ENCODE measurements at regions of chr17 and their contacts with region 1.

Region 1: DNA sequence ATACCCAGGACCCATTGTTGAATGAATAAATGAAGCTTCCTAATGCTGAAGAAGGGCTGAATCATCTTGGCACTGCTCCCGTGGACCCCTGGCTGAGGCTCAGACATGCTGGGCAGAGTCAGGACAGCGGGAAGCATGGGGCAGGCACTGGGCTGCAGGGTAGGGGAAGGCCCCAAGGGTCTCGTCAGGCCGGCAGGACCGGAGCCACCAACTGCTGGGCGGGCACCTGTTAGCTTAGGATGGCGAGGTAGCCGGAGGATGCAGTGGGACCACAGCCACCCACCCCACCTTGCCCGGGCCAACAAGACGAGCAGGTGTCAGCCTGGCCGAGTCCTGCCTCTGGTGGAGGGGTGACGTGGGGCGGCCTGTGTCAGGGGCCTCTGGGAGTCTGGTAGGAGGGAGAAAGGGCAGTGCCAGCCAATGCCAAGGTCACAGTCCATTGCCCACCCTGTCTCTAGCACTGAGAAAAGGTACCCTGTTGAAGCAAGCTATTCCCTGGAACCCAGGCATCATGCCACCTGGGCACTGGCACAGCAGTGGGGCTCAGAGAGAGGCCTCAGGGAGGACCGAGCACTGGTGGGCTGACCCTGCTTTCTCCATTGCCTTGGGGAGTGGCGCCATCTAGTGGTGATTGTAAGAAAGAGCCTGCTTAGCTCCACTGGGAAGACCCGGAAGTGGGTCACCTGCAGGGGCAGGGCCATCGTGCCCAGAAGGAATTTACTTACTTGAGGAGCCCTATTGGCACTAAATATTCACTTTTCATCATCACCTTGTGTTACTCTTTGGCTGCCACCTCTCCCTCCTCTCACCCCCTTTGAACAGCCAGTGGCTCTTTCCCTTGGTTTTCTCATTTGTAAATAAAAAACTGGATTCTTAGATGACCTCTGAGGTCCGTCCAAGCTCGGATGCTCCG is 3.0 kb upstream of the DLX3 start:
- DNase-seq: peak; percentile 94
- H3K4me3 Mint-ChIP-seq: peak overlapping the region; percentile 11
- H3K27ac Mint-ChIP-seq: no peak overlapping the region
- H3K4me1 Mint-ChIP-seq: peaks cover 24% of the 10 kb centered on the region
- H3K27me3 Mint-ChIP-seq: peaks cover 80% of the 10 kb centered on the region
- CTCF ChIP-seq: peak; percentile 93

Region 2: GRCh38 chr17:49822829-49823228 is 175.2 kb before region 1 on chr17:
- CTCF ChIA-PET with region 1: interaction called, 13 read pairs
- POLR2A ChIA-PET with region 1: no interaction called
- intact Hi-C with region 1: no loop called
- DNase-seq: no peak
- H3K4me3 Mint-ChIP-seq: no peak overlapping the region
- H3K27ac Mint-ChIP-seq: no peak overlapping the region
- H3K4me1 Mint-ChIP-seq: no peaks in the 10 kb centered on the region
- H3K27me3 Mint-ChIP-seq: no peaks in the 10 kb centered on the region
- CTCF ChIP-seq: no peak

Region 3: GRCh38 chr17:49880291-49881053 is 117.6 kb before region 1 on chr17:
- CTCF ChIA-PET with region 1: interaction called, 199 read pairs
- POLR2A ChIA-PET with region 1: interaction called, 5 read pairs
- intact Hi-C with region 1: loop called (anchors 1 kb)
- DNase-seq: peak; percentile 53
- H3K4me3 Mint-ChIP-seq: no peak overlapping the region
- H3K27ac Mint-ChIP-seq: no peak overlapping the region
- H3K4me1 Mint-ChIP-seq: no peaks in the 10 kb centered on the region
- H3K27me3 Mint-ChIP-seq: peaks cover 29% of the 10 kb centered on the region
- CTCF ChIP-seq: peak; percentile 98

Region 4: DNA sequence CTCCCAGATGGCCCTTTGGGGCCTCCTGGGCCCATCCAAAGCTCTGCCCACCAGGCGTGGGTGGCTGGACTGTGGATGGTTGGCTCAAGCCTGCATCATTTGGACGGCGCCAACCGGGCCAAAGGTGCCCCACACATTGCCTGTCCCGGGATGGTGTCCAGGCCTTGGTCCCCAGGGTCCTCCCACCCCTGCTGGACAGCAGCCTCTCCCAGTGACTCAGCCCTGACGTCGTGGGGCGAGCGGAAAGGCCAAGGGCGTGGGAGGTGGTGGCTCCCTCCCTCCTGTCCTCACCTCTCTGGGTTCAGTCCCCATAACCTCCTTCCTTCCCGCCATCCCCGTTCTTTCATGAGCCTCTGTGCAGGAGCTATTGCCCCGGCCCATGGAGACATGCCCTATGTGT is 71.2 kb before region 1 on chr17:
- CTCF ChIA-PET with region 1: interaction called, 12 read pairs
- POLR2A ChIA-PET with region 1: no interaction called
- intact Hi-C with region 1: no loop called
- DNase-seq: peak; percentile 42
- H3K4me3 Mint-ChIP-seq: no peak overlapping the region
- H3K27ac Mint-ChIP-seq: no peak overlapping the region
- H3K4me1 Mint-ChIP-seq: no peaks in the 10 kb centered on the region
- H3K27me3 Mint-ChIP-seq: peaks cover 53% of the 10 kb centered on the region
- CTCF ChIP-seq: no peak

Region 5: GRCh38 chr17:49980703-49981197 is 17.3 kb before region 1 on chr17:
- CTCF ChIA-PET with region 1: interaction called, 80 read pairs
- POLR2A ChIA-PET with region 1: interaction called, 6 read pairs
- intact Hi-C with region 1: no loop called
- DNase-seq: peak; percentile 37
- H3K4me3 Mint-ChIP-seq: no peak overlapping the region
- H3K27ac Mint-ChIP-seq: no peak overlapping the region
- H3K4me1 Mint-ChIP-seq: peaks cover 31% of the 10 kb centered on the region
- H3K27me3 Mint-ChIP-seq: no peaks in the 10 kb centered on the region
- CTCF ChIP-seq: no peak

Region 6: GRCh38 chr17:50087246-50087911 is 89.3 kb after region 1 on chr17:
- CTCF ChIA-PET with region 1: interaction called, 12 read pairs
- POLR2A ChIA-PET with region 1: interaction called, 3 read pairs
- intact Hi-C with region 1: no loop called
- DNase-seq: peak; percentile 69
- H3K4me3 Mint-ChIP-seq: no peak overlapping the region
- H3K27ac Mint-ChIP-seq: peak overlapping the region; percentile 27
- H3K4me1 Mint-ChIP-seq: no peaks in the 10 kb centered on the region
- H3K27me3 Mint-ChIP-seq: no peaks in the 10 kb centered on the region
- CTCF ChIP-seq: peak; percentile 85

Measured in MCF 10A (cell line).